Endothelial cell of umbilical vein (primary cell): ENCODE measurements at regions of chr1 and their contacts with region 1.

Region 1: GRCh38 chr1:54764133-54764921 is at the start of gene PARS2:
- DNase-seq: peak; percentile 100
- H3K4me3 ChIP-seq: peak within 1 kb of the TSS; percentile 44 to 90 (median 88)
- H3K27ac ChIP-seq: peak within 1 kb of the TSS; percentile 68
- H3K4me1 ChIP-seq: peaks cover 5% of the 10 kb centered on the region
- H3K27me3 ChIP-seq: peaks cover 0 to 4% of the 10 kb centered on the region in 2 experiments
- CTCF ChIP-seq: no peak
- POLR2A ChIP-seq: peak; percentile 72
- total RNA-seq, gene PARS2: 3.0 and 3.8 TPM in 2 replicates

Region 2: GRCh38 chr1:54335755-54336108 is 428.6 kb before region 1 on chr1:
- CTCF ChIA-PET with region 1: no interaction called
- POLR2A ChIA-PET with region 1: no interaction called
- dilution Hi-C with region 1: no loop called
- intact Hi-C with region 1: loop called (anchors 10 kb)
- DNase-seq: peak; percentile 90
- H3K4me3 ChIP-seq: peak overlapping the region in 1 of 3 experiments; percentile 18
- H3K27ac ChIP-seq: peak overlapping the region; percentile 89
- H3K4me1 ChIP-seq: peaks cover 31% of the 10 kb centered on the region
- H3K27me3 ChIP-seq: no peaks in the 10 kb centered on the region
- CTCF ChIP-seq: no peak
- POLR2A ChIP-seq: peak; percentile 75

Region 3: DNA sequence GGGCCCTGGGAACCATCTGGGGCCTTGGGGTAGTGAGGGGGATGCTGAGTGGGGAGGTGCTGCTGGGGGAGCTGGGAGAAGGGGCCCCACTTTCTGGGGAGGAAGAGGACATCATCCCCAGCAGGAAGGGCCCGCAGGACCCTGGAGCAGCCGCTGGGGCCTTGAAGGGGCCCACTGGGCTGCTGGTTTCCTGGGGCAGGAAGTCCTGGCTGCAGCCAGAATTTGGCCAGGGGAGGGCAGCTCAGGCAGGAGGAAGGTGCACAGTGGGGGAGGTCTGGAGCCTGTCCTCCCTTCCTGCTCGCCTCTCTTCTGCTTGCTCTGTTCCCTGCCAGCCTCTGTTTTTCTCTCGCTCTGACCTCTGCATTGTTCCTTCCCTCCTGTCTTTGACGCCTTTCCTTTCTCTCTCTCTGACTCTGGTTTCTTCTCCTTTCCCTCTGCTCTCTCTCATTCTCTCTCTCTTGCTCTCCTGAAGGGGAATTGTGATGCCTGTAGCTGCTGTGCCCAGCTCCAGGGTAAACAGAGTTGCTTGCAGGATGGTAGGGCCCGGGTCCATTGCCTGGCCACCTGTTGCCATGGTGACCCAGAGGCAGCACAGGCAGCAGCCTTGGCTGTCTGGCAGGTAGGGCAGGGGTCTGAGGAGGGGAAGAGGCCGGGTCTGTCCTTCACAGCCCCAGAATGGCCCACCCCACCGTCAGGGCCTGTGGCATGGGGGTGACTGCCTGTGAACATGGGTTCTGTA is 192.4 kb before region 1 on chr1:
- CTCF ChIA-PET with region 1: no interaction called
- POLR2A ChIA-PET with region 1: no interaction called
- dilution Hi-C with region 1: no loop called
- intact Hi-C with region 1: loop called (anchors 2 kb)
- DNase-seq: peak; percentile 50
- H3K4me3 ChIP-seq: no peak overlapping the region
- H3K27ac ChIP-seq: peak overlapping the region; percentile 61
- H3K4me1 ChIP-seq: peaks cover 31% of the 10 kb centered on the region
- H3K27me3 ChIP-seq: no peaks in the 10 kb centered on the region
- CTCF ChIP-seq: no peak
- POLR2A ChIP-seq: no peak

Region 4: GRCh38 chr1:54715493-54716298 is 48.6 kb before region 1 on chr1 and contains the start of gene TTC4:
- CTCF ChIA-PET with region 1: no interaction called
- POLR2A ChIA-PET with region 1: no interaction called
- dilution Hi-C with region 1: no loop called
- intact Hi-C with region 1: loop called (anchors 1 kb)
- DNase-seq: peak; percentile 81
- H3K4me3 ChIP-seq: peak within 1 kb of the TSS; percentile 68 to 98 (median 95)
- H3K27ac ChIP-seq: peak within 1 kb of the TSS; percentile 77
- H3K4me1 ChIP-seq: peaks cover 11% of the 10 kb centered on the region
- H3K27me3 ChIP-seq: peaks cover 0 to 2% of the 10 kb centered on the region in 2 experiments
- CTCF ChIP-seq: no peak
- POLR2A ChIP-seq: peak; percentile 96
- total RNA-seq, gene TTC4: 21.4 and 28.8 TPM in 2 replicates

Region 5: DNA sequence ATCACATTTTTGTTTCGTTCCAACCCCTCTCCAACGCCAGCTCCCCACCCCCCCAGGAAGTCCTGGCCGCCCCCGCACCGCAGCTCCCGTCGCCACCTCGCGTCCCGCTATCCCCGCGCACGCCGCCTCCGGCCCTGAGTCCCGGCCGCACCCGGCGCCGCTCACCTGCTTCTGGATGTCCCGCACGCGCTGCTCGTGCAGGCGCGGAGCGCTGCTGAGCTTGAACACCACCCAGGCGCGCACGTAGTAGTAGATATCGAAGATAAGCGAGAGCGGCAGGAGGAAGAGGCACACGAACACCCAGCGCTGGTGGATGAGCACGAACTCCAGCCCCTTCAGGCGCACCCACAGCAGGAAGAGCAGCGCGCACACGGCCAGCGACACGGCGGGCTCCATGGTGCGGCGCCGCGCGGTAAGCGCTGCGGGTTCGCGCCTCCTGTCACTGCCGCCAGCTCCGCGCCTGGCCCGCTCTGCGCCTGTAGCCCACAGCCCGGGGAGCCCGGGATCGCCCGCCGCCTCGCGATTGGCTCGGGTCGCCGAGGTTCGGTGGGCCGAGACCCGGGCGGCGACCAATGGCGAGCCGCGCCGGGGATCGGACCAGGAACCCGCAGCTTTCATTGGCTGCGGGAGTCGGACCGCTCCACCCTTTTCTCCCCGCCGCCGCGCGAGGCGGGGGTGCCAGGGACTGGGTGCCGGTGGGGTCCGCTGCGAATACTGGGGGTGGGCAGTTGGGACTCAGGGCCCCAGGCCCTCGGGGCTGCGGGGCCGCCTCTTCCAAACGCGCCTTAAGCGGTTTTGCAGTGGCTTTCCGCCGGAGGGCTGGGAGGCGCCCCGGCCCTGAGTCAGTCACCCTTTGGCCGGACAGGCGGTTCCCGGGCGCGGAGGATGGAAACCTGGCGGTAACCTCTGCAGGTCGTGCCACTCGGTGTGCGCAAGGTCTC is 122.7 kb after region 1 on chr1 and contains the start of gene DHCR24:
- CTCF ChIA-PET with region 1: no interaction called
- POLR2A ChIA-PET with region 1: no interaction called
- dilution Hi-C with region 1: no loop called
- intact Hi-C with region 1: loop called (anchors 1 kb)
- DNase-seq: peak; percentile 85
- H3K4me3 ChIP-seq: peak within 1 kb of the TSS; percentile 52 to 78 (median 56)
- H3K27ac ChIP-seq: peak within 1 kb of the TSS; percentile 25
- H3K4me1 ChIP-seq: peaks cover 32% of the 10 kb centered on the region
- H3K27me3 ChIP-seq: no peaks in the 10 kb centered on the region
- CTCF ChIP-seq: no peak
- POLR2A ChIP-seq: peak; percentile 77
- total RNA-seq, gene DHCR24: 223 and 229 TPM in 2 replicates

Region 6: GRCh38 chr1:54965624-54966340 is 201.5 kb after region 1 on chr1:
- CTCF ChIA-PET with region 1: no interaction called
- POLR2A ChIA-PET with region 1: no interaction called
- dilution Hi-C with region 1: no loop called
- intact Hi-C with region 1: no loop called
- DNase-seq: peak; percentile 18
- H3K4me3 ChIP-seq: no peak overlapping the region
- H3K27ac ChIP-seq: no peak overlapping the region
- H3K4me1 ChIP-seq: peaks cover 8% of the 10 kb centered on the region
- H3K27me3 ChIP-seq: no peaks in the 10 kb centered on the region
- CTCF ChIP-seq: no peak
- POLR2A ChIP-seq: no peak

Region 7: GRCh38 chr1:55081188-55081904 is 317.0 kb after region 1 on chr1:
- CTCF ChIA-PET with region 1: no interaction called
- POLR2A ChIA-PET with region 1: no interaction called
- dilution Hi-C with region 1: no loop called
- intact Hi-C with region 1: no loop called
- DNase-seq: peak; percentile 21
- H3K4me3 ChIP-seq: no peak overlapping the region
- H3K27ac ChIP-seq: peak overlapping the region; percentile 16
- H3K4me1 ChIP-seq: peaks cover 11% of the 10 kb centered on the region
- H3K27me3 ChIP-seq: no peaks in the 10 kb centered on the region
- CTCF ChIP-seq: no peak
- POLR2A ChIP-seq: no peak